ENCODE measurements at regions of chr1 and their contacts with region 1.

Region 1: DNA sequence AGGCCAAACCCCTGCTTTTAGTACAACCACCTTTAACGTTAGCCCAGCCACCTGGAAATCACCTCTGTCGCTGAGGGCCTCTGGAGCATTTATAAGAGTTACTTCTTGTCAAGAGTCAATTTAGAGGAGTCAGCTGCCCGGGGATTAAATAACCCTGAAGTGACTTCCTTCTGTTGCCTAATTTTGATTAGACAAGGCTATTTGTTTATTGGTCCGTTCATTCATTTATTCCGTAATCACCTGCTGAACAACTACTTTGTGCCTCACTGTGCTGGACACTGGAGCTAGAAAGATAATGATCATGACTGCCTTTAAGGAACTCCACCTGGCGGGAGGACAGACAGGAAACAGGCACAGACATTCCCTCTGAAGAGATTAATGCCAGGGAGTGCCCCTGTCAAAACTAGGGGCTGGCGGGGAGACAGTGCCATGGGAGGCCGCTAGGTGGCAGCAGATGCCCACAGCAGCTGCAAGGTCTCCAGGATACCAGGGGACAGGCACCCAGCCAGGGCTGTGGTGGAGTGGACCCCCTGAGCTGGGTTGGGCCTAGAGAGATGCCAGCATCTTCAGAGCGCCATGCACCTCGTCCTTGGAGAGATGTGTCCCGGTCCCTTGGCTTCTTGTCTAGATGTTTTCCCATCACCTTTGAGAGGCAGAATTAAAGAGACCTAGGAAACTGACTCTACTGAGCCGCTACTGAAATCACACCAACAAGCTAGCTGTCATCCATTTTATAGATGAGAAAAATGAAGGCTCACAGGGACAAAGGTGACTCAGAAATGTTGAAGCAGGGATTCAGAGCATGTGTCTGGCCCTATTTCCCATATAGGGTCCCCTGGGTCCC is 3.7 kb downstream of the REN start:
- DNase-seq: peak; percentile 77 to 85
- ATAC-seq: peak; percentile 89 to 98
- H3K4me3 ChIP-seq: no peak overlapping the region
- H3K27ac ChIP-seq: no peak overlapping the region
- H3K4me1 ChIP-seq: no peaks in the 10 kb centered on the region
- CTCF ChIP-seq: peak; percentile 98
- EP300 ChIP-seq: no peak
- POLR2A ChIP-seq: no peak
- RAD21 ChIP-seq: peak; percentile 97

Region 2: DNA sequence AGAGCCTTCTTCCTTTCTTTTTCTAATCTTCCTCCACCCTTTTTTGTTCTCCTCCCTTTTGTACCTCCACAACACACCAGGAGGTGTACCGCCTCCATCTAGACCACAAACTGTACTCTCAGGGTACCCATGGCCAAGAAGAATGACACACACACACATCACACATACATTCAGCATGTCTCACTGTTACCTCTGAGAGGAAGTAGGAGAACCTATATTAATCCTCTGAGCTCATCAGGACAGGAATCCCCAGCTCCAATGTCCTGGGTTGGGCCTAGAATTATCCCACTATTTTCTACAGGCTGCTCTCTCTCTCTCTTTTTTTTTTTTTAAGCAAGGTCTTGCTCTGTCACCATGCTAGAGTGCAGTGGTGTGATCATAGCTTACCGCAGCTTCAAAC is 499.2 kb before region 1 on chr1:
- CTCF ChIA-PET with region 1: no interaction called
- POLR2A ChIA-PET with region 1: no interaction called
- DNase-seq: peak; percentile 31 to 52
- ATAC-seq: peak; percentile 88 to 92
- H3K4me3 ChIP-seq: no peak overlapping the region
- H3K27ac ChIP-seq: peak overlapping the region; percentile 6 to 42; a peak in 2 of 6 replicates
- H3K4me1 ChIP-seq: peaks cover 18% of the 10 kb centered on the region; the same call in 2 of the 3 replicates
- CTCF ChIP-seq: no peak
- EP300 ChIP-seq: no peak
- POLR2A ChIP-seq: no peak
- RAD21 ChIP-seq: no peak

Region 3: DNA sequence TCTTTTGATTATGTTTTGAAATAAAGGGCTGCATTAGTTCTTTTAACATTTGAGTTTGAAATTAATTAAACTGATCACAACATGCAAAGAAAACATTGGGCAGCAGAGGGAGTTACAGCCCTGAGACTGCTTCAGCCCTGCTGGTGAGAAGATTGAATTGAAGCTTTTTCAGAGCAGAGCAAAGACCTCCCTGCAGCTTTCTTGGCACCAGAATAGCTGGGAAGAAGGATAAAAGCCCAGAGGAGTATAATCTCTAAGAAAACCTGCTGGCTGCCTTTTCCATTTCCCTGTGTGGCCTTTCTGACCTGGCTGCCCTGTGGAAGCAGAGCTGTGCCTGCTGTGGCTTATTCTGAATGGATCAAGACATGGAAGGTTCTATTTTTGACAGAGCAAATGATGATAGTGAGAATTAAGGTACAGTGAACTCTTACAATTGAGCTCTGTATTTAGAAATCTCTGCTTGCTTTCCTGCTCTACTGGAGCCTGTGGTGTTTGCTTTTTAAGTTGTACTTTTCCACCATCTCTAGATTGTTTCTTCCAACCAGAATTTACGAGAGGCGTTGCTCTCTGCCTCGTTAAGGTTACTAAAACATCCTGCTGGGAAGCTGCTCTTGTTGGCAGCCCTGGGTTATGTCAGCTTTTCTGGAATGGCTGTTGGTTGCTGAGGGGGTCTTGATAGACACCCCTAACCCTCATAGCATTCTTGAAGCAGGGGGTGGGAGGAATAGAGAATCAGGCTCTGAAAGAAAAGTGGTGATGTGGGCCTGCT is 291.2 kb before region 1 on chr1:
- CTCF ChIA-PET with region 1: interaction called, 14 read pairs
- POLR2A ChIA-PET with region 1: no interaction called
- DNase-seq: peak; percentile 76 to 94
- ATAC-seq: peak; percentile 94 to 96
- H3K4me3 ChIP-seq: no peak overlapping the region
- H3K27ac ChIP-seq: peak overlapping the region in 1 of 2 experiments; percentile 23; a peak in 1 of 6 replicates
- H3K4me1 ChIP-seq: peaks cover 6% of the 10 kb centered on the region; the same call in 2 of the 3 replicates
- CTCF ChIP-seq: peak; percentile 96
- EP300 ChIP-seq: no peak
- POLR2A ChIP-seq: no peak
- RAD21 ChIP-seq: peak; percentile 96 to 98

Region 4: GRCh38 chr1:204145033-204145504 is 17.4 kb before region 1 on chr1:
- CTCF ChIA-PET with region 1: interaction called, 62 read pairs
- POLR2A ChIA-PET with region 1: no interaction called
- DNase-seq: no peak
- ATAC-seq: no peak
- H3K4me3 ChIP-seq: no peak overlapping the region
- H3K27ac ChIP-seq: no peak overlapping the region
- H3K4me1 ChIP-seq: no peaks in the 10 kb centered on the region
- CTCF ChIP-seq: no peak
- EP300 ChIP-seq: no peak
- POLR2A ChIP-seq: no peak
- RAD21 ChIP-seq: no peak

Region 5: DNA sequence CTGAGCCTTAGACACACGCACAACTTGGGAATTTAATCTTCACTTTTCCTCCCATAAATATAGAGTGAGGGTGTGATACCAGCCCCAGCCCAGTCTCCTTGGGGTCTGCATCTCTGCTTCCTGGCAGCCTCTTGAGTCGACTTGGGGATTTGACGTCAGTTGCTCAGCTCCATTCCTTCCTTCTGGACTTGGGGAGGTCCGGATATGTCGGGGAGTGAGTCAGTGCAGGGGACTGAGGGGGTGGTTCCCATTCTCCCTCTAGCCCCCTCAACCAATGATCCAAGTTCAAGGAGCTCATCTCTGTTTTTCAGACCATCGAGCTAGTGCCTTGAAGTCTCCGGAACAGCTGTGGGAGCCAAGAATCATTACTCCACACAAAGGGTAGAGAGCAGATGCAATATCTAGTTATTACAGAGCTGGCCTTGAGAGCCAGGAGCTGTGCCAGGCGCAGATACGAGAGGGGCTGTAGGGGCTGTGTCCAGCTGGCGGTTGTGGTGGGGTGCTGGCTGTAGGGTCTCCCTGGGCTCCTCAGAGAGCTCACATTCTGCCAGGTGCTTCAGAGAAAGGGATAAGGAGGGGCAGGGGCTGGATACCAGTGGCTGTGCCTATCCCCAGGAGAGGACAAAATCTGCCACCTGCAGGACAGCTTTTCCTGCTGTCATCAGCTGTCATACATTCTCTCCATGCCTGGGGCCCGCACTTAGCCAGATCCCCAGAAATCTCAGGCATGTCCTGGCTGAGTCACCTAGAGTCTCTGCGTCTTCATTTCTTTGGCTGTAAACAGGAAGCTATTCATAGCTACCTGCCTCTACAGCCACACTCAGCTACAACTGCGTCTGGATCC is 35.9 kb after region 1 on chr1:
- CTCF ChIA-PET with region 1: interaction called, 314 read pairs
- POLR2A ChIA-PET with region 1: no interaction called
- DNase-seq: peak; percentile 44 to 49
- ATAC-seq: peak; percentile 57 to 59
- H3K4me3 ChIP-seq: no peak overlapping the region
- H3K27ac ChIP-seq: 0 out of 6 replicates have a peak overlapping the region, but pooled peaks of 1 of the 2 experiments have one; percentile 18
- H3K4me1 ChIP-seq: peaks cover 5% of the 10 kb centered on the region; the same call in 2 of the 3 replicates
- CTCF ChIP-seq: peak; percentile 12; the same call in 1 of the 3 replicates
- EP300 ChIP-seq: no peak
- POLR2A ChIP-seq: no peak
- RAD21 ChIP-seq: peak; percentile 16 to 34; a peak in 3 of 5 replicates

Region 6: GRCh38 chr1:204225841-204226735 is 63.6 kb after region 1 on chr1:
- CTCF ChIA-PET with region 1: interaction called, 13 read pairs
- POLR2A ChIA-PET with region 1: no interaction called
- DNase-seq: no peak
- ATAC-seq: no peak
- H3K4me3 ChIP-seq: no peak overlapping the region
- H3K27ac ChIP-seq: no peak overlapping the region
- H3K4me1 ChIP-seq: no peaks in the 10 kb centered on the region
- CTCF ChIP-seq: no peak
- EP300 ChIP-seq: no peak
- POLR2A ChIP-seq: no peak
- RAD21 ChIP-seq: no peak

Region 7: DNA sequence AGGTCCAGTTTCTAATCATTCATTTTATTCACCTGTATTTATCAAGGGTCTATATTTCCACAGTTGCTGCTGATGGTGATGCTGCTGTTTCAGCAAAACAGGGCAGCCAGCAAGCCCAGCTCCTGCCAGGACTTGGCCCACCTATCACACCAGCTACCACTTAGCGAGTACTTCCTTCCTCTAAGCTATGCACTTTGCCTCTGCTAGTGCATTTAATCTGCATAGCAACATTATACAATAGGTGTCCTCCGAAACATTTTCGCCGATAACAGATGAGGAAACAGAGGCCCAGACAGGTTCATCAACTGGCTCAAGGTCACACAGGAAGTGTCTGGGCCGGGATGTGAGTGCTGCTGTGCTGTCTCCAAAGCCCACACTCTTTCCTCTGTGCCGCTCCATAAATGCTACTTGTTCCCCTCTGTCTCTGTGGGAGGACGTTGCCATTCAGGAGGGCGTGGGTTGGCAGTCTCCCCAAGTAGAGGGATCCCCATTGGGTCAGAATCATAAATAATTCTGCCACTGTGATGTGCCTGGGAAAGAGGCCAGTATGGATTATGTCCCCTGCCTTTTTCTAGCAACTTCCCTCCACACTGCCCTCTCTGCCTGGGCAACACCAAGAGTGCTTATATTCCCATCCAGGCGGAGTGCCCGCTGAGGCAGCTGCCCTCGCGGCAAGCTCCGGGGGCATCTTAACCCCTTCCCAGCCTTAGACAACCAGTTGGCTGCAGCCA is 206.7 kb after region 1 on chr1:
- CTCF ChIA-PET with region 1: interaction called, 219 read pairs
- POLR2A ChIA-PET with region 1: no interaction called
- DNase-seq: no peak
- ATAC-seq: no peak
- H3K4me3 ChIP-seq: no peak overlapping the region
- H3K27ac ChIP-seq: no peak overlapping the region
- H3K4me1 ChIP-seq: peaks cover 3% of the 10 kb centered on the region; the same call in 2 of the 3 replicates
- CTCF ChIP-seq: no peak
- EP300 ChIP-seq: no peak
- POLR2A ChIP-seq: no peak
- RAD21 ChIP-seq: no peak

Region 8: DNA sequence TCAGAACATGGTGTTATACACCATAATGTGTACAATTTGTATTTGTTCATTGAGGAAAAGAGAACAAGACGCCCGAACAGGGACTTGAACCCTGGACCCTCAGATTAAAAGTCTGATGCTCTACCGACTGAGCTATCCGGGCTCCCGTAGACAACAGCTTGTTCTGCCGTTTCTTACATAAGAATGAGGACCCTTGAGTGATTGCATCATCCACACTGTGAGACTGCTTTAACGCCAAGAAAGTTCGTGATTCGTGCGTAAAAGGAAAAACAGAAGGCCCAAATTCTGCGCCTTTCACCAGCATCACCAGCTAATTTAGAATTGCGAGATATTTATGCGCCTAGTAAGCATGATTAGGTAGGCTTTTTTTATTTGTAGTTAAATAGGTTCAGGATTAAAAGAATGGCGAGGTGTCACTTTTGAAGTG is 344.5 kb after region 1 on chr1:
- CTCF ChIA-PET with region 1: interaction called, 15 read pairs
- POLR2A ChIA-PET with region 1: no interaction called
- DNase-seq: peak; percentile 35 to 93
- ATAC-seq: peak; percentile 79 to 87
- H3K4me3 ChIP-seq: peak overlapping the region; percentile 53
- H3K27ac ChIP-seq: peak overlapping the region; percentile 78 to 89
- H3K4me1 ChIP-seq: peaks cover 21% of the 10 kb centered on the region
- CTCF ChIP-seq: no peak
- EP300 ChIP-seq: no peak
- POLR2A ChIP-seq: no peak
- RAD21 ChIP-seq: no peak